Head of caudate nucleus (tissue), 42 donors: ENCODE measurements at regions of chr3 and their contacts with region 1.

Region 1: DNA sequence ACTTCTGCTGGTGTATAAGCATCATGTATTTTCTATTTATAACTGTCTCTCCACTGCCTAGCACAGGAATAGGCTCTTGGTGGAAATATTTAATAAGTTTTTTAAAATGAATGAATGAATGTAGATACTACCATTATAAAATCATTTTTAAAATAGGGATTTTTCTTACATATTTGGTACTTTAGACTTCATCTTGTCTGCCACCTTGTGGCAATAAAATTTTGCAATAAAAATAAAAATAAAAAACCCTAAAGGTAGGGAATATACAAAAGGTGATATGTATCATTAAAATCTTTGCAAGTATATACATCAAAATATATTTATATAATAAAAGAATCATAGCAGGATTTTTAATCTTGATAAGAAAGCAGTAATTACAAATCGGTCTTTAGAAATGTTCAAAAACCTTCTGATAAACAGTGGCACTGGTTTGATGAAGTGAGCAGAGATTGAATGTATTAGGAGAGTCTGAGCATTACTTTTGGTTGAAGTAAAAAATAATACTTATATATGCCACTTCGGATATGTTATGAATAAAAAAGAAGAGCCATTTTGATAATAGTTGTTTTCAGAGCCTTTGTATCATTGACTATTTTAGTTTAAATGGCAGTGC is 95.2 kb downstream of the SPATA16 start:
- DNase-seq: no peak

Region 2: GRCh38 chr3:172836390-172836997 is 209.4 kb before region 1 on chr3:
- intact Hi-C with region 1: loop called (anchors 10 kb)
- DNase-seq: peak in 32 of 42 donors; percentile 15 to 86 (median 54)